ENCODE measurements at regions of chr10 and their contacts with region 1.

Region 1: GRCh38 chr10:97463363-97464132 is 17.6 kb downstream of the ZDHHC16 start:
- DNase-seq: peak in 3 of 10 donors; percentile 22 to 41 (median 23)

Region 2: GRCh38 chr10:97553575-97554031 is 90.1 kb after region 1 on chr10:
- intact Hi-C with region 1: loop called (anchors 1 kb)
- DNase-seq: peak in 9 of 10 donors; percentile 50 to 96 (median 76)

Measured in posterior cingulate gyrus (tissue), 11 donors.